ENCODE measurements at regions of chr4 and their contacts with region 1.

Region 1: DNA sequence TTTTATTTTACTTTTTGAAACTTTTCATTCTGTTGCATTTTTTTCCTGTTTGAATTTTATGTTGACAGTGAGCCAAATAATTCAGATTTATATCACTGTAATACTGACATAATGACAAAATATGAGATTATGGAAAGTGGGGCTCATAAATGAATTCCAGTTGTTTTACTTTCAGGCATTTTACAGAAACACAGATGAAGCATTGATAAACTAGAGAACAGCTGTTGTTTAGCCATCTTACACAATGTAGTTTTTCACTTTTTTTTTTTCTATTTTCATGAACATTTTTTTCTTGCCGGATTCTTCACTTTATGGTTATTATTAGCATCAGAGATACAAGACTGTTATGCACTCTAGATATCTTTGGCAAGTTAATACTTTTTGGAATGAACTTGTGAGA is 91.7 kb upstream of the PAQR3 start:
- DNase-seq: no peak
- H3K4me3 ChIP-seq: no peak overlapping the region
- H3K27ac ChIP-seq: no peak overlapping the region
- H3K4me1 ChIP-seq: peaks cover 4 to 46% (median 18%) of the 10 kb centered on the region in 4 donors
- H3K27me3 ChIP-seq: no peaks in the 10 kb centered on the region
- CTCF ChIP-seq: no peak
- EP300 ChIP-seq: no peak
- POLR2A ChIP-seq: no peak

Region 2: GRCh38 chr4:78962597-78963115 is 68.3 kb before region 1 on chr4:
- intact Hi-C with region 1: loop called (anchors 10 kb)
- DNase-seq: no peak
- H3K4me3 ChIP-seq: no peak overlapping the region
- H3K27ac ChIP-seq: peak overlapping the region; percentile 74 to 81 (median 78)
- H3K4me1 ChIP-seq: peaks cover 0 to 47% (median 20%) of the 10 kb centered on the region in 4 donors
- H3K27me3 ChIP-seq: no peaks in the 10 kb centered on the region
- CTCF ChIP-seq: no peak
- EP300 ChIP-seq: peak; percentile 46
- POLR2A ChIP-seq: no peak

Region 3: DNA sequence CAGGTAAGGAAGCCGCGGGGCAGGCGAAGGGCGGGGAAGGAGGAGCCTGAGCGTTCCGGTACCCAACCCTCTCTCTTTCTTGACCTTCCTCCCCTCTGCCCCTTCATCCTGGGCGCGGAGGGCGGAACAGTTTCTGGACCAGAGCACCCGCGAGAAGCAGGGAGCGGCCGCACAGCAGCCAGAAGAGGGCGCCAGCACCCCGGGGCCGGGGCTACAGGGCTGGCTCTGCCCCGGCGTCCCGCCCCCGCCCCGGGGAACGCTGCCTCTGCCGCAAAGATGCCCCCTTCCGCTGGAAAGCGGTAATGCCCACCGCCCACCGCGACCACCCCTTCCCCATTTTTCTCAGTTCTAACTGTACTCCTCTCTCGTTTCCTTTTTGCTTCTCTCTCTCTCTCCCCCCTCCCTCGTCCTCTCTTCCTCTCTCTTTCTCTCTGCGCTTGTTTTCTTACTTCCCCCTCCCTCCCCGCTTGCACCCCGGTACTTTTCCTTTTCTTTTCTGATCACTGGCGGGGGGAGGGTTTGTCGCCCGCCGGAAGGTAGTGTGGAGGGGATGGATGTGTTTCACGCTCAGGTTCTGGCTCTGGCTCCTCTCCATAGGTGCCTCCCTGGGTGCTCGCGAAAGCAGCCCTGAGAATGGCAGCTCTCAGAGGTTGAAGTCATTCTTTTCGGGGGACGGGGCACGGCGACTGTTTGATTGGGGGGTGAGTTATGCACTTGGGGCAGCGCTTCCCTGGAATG is 1153.2 kb after region 1 on chr4:
- intact Hi-C with region 1: loop called (anchors 10 kb)
- DNase-seq: no peak
- H3K4me3 ChIP-seq: peak overlapping the region; percentile 73 to 97 (median 85)
- H3K27ac ChIP-seq: peak overlapping the region; percentile 86 to 93 (median 88)
- H3K4me1 ChIP-seq: peaks cover 32 to 56% (median 47%) of the 10 kb centered on the region in 4 donors
- H3K27me3 ChIP-seq: no peaks in the 10 kb centered on the region
- CTCF ChIP-seq: peak; percentile 88 to 96 (median 90)
- EP300 ChIP-seq: no peak
- POLR2A ChIP-seq: no peak